SK-N-SH (cell line): ENCODE measurements at regions of chr22 and their contacts with region 1.

Region 1: GRCh38 chr22:28600546-28601143 is 79.0 kb downstream of the TTC28 start:
- DNase-seq: peak; percentile 25
- H3K4me3 ChIP-seq: no peak overlapping the region; a peak in 1 of 4 replicates
- H3K27ac ChIP-seq: no peak overlapping the region
- H3K4me1 ChIP-seq: peaks cover 0 to 3% of the 10 kb centered on the region in 2 experiments; a peak in 2 of 4 replicates
- H3K27me3 ChIP-seq: no peaks in the 10 kb centered on the region
- CTCF ChIP-seq: peak; percentile 63
- EP300 ChIP-seq: no peak
- RAD21 ChIP-seq: peak; percentile 87

Region 2: DNA sequence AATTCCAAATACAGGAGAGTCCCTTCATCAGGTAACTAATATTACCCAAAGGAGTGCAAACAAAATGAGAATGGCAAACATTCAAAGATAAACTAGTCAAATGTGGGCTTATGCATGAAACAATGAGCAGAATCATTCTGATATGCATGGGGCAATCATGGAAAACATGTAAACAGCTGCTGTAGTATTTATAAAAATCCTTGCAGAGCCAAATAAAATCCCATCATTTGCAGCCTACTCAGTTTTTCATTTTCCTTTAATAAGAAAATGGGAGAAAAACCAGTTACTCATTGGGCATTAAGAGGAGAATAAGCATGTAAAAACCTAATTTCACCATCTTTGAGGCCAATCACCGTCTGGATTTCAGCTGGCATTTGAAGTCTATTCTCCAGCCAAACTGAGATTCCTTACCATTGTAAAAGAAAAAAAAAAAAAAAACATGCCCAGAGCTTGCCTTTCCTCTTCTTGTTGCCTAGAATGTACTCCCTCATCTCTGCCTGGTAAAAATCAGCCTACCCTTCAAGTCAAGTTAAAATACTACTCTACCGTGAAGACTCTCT is 170.1 kb before region 1 on chr22:
- CTCF ChIA-PET with region 1: no interaction called
- POLR2A ChIA-PET with region 1: no interaction called
- DNase-seq: no peak
- H3K4me3 ChIP-seq: no peak overlapping the region
- H3K27ac ChIP-seq: peak overlapping the region in 1 of 2 experiments; percentile 40; a peak in 1 of 4 replicates
- H3K4me1 ChIP-seq: peaks cover 0 to 12% of the 10 kb centered on the region in 2 experiments; a peak in 2 of 4 replicates
- H3K27me3 ChIP-seq: no peaks in the 10 kb centered on the region
- CTCF ChIP-seq: no peak
- EP300 ChIP-seq: no peak
- RAD21 ChIP-seq: no peak

Region 3: DNA sequence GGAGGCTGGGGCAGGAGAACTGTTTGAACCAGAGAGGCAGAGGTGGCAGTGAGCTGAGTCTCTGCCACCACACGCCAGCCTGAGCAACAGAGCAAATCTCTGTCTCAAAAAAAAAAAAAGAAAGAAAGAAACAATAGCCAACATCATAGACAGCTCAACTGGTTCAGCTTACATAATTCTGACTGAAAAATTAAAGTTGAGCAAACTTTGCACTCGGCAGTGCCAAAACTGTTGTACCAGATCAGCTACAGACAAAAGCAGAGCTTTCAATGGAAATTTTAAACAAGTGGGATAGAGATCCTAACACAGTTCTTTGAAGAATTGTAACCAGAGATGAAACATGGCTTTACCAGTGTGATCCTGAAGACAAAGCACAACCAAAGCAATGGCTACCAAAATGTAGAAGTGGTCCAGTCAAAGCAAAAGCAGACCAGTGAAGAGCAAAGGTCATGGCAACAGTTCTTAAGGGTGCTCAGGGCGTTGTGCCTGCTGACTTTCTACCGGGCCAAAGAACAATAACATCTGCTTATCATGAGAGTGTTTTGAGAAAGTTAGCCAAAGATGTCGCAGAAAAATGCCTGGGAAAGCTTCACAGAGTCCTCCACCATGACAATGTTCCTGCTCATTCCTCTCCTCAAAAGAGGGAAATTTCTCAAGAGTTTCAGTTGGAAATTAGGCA is 19.7 kb after region 1 on chr22:
- CTCF ChIA-PET with region 1: interaction called, 19 read pairs
- POLR2A ChIA-PET with region 1: no interaction called
- DNase-seq: no peak
- H3K4me3 ChIP-seq: no peak overlapping the region
- H3K27ac ChIP-seq: no peak overlapping the region
- H3K4me1 ChIP-seq: no peaks in the 10 kb centered on the region
- H3K27me3 ChIP-seq: no peaks in the 10 kb centered on the region
- CTCF ChIP-seq: no peak
- EP300 ChIP-seq: no peak
- RAD21 ChIP-seq: no peak

Region 4: DNA sequence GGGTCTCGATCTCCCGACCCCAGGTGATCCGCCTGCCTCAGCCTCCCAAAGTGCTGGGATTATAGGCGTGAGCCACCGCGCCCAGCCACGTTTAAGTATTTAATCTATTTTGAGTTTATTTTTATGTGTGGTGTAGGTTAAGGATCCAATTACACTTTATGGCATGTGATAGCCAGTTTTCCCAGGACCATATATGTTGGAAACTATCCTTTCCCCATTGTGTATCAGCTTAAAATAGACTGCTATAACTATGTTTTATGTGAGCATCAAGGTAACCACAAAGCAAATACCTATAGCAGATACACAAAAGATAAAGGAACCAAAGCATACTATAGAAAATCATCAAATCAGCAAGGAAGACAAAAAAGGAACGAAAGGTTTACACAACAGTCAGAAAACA is 36.6 kb after region 1 on chr22:
- CTCF ChIA-PET with region 1: no interaction called
- POLR2A ChIA-PET with region 1: no interaction called
- DNase-seq: no peak
- H3K4me3 ChIP-seq: no peak overlapping the region
- H3K27ac ChIP-seq: no peak overlapping the region
- H3K4me1 ChIP-seq: no peaks in the 10 kb centered on the region
- H3K27me3 ChIP-seq: no peaks in the 10 kb centered on the region
- CTCF ChIP-seq: no peak
- EP300 ChIP-seq: no peak
- RAD21 ChIP-seq: no peak

Region 5: DNA sequence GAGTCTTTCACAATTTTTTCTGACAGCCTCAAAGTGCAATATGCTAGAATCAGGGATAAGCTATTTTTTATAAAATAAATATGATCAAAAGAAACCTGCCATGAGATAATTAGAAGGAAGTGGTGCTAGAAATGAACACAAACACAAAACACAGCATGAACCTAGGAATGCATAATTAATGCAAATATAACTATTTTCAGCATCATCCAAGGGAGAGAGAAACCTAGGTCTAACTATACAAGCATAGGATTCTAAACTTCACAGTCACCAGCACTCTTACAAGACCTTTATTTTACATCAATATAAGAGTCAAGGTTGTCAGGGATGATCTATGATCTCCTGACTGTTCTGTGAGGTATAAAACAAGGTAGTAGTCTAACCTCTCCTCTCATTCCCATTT is 49.8 kb after region 1 on chr22:
- CTCF ChIA-PET with region 1: no interaction called
- POLR2A ChIA-PET with region 1: no interaction called
- DNase-seq: no peak
- H3K4me3 ChIP-seq: no peak overlapping the region
- H3K27ac ChIP-seq: no peak overlapping the region
- H3K4me1 ChIP-seq: no peaks in the 10 kb centered on the region
- H3K27me3 ChIP-seq: no peaks in the 10 kb centered on the region
- CTCF ChIP-seq: no peak
- EP300 ChIP-seq: no peak
- RAD21 ChIP-seq: no peak

Region 6: GRCh38 chr22:28710584-28711191 is 110.0 kb after region 1 on chr22:
- CTCF ChIA-PET with region 1: interaction called, 12 read pairs
- POLR2A ChIA-PET with region 1: no interaction called
- DNase-seq: peak; percentile 42
- H3K4me3 ChIP-seq: peak overlapping the region in 1 of 2 experiments; percentile 7; a peak in 1 of 4 replicates
- H3K27ac ChIP-seq: peak overlapping the region; percentile 87 to 92
- H3K4me1 ChIP-seq: peaks cover 17 to 35% of the 10 kb centered on the region in 2 experiments; a peak in 3 of 4 replicates
- H3K27me3 ChIP-seq: no peaks in the 10 kb centered on the region
- CTCF ChIP-seq: peak; percentile 27
- EP300 ChIP-seq: peak in 1 of 2 experiments; percentile 25; a peak in 2 of 4 replicates
- RAD21 ChIP-seq: no peak

Region 7: GRCh38 chr22:28817919-28818909 is 217.6 kb after region 1 on chr22:
- CTCF ChIA-PET with region 1: interaction called, 13 read pairs
- POLR2A ChIA-PET with region 1: interaction called, 3 read pairs
- DNase-seq: peak; percentile 34
- H3K4me3 ChIP-seq: no peak overlapping the region
- H3K27ac ChIP-seq: peak overlapping the region in 1 of 2 experiments; percentile 14; a peak in 1 of 4 replicates
- H3K4me1 ChIP-seq: peaks cover 0 to 6% of the 10 kb centered on the region in 2 experiments; a peak in 1 of 4 replicates
- H3K27me3 ChIP-seq: no peaks in the 10 kb centered on the region
- CTCF ChIP-seq: no peak
- EP300 ChIP-seq: no peak
- RAD21 ChIP-seq: no peak

Region 8: GRCh38 chr22:28829358-28830181 is 228.9 kb after region 1 on chr22:
- CTCF ChIA-PET with region 1: interaction called, 97 read pairs
- POLR2A ChIA-PET with region 1: no interaction called
- DNase-seq: peak; percentile 77
- H3K4me3 ChIP-seq: peak overlapping the region in 1 of 2 experiments; percentile 31; a peak in 1 of 4 replicates
- H3K27ac ChIP-seq: no peak overlapping the region
- H3K4me1 ChIP-seq: no peaks in the 10 kb centered on the region
- H3K27me3 ChIP-seq: no peaks in the 10 kb centered on the region
- CTCF ChIP-seq: peak; percentile 98
- EP300 ChIP-seq: no peak
- RAD21 ChIP-seq: peak; percentile 98

Region 9: DNA sequence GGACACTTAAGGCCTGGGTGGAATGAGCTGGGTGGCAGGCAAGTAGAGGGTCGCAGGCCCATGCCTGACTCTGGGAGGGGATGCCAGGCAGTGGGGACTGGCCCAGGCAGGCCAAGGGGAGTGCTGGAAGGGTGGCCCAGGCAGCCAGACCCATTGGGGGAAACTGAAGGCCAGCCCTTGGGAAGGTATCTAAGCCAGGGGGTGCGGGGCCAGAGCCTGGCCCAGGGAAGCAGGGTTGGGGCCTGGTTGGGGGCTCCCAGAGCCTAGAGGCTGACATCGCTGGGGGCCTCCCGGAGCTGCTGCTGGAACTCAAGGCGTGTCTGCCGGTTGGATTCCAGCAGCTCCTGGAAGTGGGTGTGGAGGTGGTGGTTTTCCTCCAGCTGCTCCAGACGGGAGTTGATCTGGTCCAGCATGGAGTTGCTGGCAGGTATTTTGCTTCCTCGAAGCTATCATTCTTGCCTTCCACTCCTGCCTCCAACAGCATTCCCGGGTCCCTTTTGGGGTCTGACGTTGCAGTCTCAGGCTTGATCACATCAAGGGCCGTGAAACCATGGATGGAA is 235.1 kb after region 1 on chr22:
- CTCF ChIA-PET with region 1: interaction called, 97 read pairs
- POLR2A ChIA-PET with region 1: no interaction called
- DNase-seq: no peak
- H3K4me3 ChIP-seq: no peak overlapping the region
- H3K27ac ChIP-seq: no peak overlapping the region
- H3K4me1 ChIP-seq: no peaks in the 10 kb centered on the region
- H3K27me3 ChIP-seq: no peaks in the 10 kb centered on the region
- CTCF ChIP-seq: no peak
- EP300 ChIP-seq: no peak
- RAD21 ChIP-seq: no peak

Region 10: DNA sequence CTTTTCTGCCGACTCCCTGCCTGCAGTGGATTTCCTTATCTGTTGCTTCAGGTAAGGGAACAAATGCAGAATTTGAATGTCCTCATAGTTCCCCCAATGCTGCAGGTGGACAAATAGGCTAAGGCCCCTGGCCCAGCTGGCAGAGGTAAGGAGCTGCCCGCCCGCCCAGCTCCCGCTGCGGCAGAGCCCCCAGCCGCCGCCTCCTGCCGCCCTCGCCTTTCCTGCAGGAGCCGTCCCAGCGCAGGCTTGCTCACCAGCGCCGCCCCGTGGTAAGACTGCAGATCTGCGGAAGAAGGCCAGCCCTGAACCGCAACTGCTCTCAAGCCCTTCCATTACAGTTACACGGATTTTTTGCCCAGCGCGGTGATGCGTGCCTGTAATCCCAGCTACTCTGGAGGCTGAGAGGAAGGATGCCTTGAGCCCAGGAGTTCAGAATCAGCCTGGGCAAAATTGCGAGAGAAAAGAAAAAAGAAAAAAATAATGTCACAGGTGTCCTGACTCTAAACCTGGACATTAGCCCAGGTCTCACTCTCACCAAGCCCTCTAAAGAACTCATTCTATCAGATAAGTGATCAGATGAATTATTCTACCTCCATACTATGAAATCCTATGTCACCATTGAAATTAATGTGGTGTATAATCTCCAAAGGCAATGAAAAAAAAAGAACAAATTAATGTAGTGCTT is 553.9 kb after region 1 on chr22:
- CTCF ChIA-PET with region 1: interaction called, 14 read pairs
- POLR2A ChIA-PET with region 1: no interaction called
- DNase-seq: peak; percentile 91
- H3K4me3 ChIP-seq: peak overlapping the region; percentile 6 to 31; a peak in 3 of 4 replicates
- H3K27ac ChIP-seq: no peak overlapping the region
- H3K4me1 ChIP-seq: peaks cover 0 to 4% of the 10 kb centered on the region in 2 experiments; a peak in 2 of 4 replicates
- H3K27me3 ChIP-seq: no peaks in the 10 kb centered on the region
- CTCF ChIP-seq: peak; percentile 91
- EP300 ChIP-seq: no peak
- RAD21 ChIP-seq: peak; percentile 80